ENCODE measurements at regions of chr7 and their contacts with region 1.

Region 1: DNA sequence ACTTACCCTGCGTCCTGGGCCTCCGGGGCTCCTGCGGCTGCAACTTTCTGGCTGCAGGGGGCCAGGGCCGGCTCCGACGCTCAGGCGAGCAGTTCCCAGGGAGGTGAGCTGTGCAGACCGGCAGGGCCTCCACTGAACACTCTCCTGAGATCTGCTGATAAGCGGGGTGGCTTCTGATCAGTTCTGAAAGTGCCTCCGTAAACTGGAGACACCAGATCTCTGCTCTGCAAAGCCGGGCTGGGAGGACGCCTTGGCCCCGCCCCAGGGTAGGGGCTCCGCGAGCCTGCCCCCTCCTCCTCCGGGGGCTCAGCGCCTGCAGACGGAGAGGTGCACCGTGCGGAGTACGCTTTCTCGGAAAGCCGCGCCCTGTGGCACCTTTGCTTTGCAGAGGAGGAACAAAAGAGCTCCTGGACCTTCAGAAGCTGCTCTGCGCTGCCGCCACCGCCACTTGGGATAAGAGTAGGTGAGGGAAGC is 141.3 kb upstream of the VKORC1L1 start:
- DNase-seq: peak; percentile 28
- H3K4me3 ChIP-seq: peak overlapping the region in 3 of 4 donors; percentile 27 to 56 (median 31)
- H3K27ac ChIP-seq: peak overlapping the region; percentile 44 to 58 (median 54)
- H3K4me1 ChIP-seq: peaks cover 0 to 12% (median 0%) of the 10 kb centered on the region in 4 donors
- H3K27me3 ChIP-seq: no peaks in the 10 kb centered on the region
- CTCF ChIP-seq: peak in 4 of 5 experiments; percentile 10 to 24 (median 16)
- EP300 ChIP-seq: no peak
- POLR2A ChIP-seq: no peak

Region 2: GRCh38 chr7:65951837-65952578 is 220.4 kb after region 1 on chr7:
- in situ Hi-C with region 1: loop called in 1 of 4 experiments (anchors 25 kb)
- intact Hi-C with region 1: no loop called
- DNase-seq: no peak
- H3K4me3 ChIP-seq: no peak overlapping the region
- H3K27ac ChIP-seq: no peak overlapping the region
- H3K4me1 ChIP-seq: no peaks in the 10 kb centered on the region
- H3K27me3 ChIP-seq: no peaks in the 10 kb centered on the region
- CTCF ChIP-seq: no peak
- EP300 ChIP-seq: no peak
- POLR2A ChIP-seq: no peak

Region 3: DNA sequence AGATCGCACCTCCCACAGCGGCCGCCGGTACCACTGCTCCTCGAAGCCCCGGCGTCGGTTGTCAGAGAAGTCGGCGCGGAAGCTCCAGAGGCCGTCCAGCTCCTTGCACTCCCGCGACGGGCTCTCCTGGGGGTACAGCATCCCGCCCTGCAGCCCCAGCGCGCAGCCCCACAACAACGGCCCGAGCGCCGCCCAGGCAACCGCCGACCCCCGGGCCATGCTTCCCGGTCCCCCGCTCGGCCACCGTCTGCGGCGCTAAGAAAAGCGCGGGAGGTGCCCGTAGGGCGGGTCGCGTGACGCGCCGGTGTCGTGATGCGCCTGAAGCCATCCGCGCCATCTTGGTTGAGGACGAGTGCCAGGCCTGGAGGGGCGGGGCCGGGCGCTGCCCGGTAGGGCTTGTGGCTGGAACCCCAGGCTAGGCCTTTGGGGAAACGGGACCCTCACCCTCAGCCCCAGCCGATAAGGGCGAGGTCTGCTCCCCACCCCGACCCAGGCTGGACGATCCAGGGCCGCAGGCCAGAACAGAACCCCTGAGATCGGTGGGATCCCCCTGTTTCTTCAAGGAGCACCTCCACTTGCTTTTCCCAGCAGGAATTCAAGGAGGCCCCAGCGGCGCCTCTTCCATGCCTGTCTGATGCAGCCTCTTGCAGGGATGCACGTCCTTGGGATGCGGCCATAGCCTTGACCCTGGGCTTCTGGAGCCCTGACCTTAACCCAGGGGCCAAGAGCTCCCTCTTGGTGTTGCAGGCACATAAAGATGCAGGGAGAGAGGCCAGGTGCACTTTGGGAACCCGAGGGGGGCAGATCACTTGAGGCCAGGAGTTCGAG is 250.6 kb after region 1 on chr7 and contains the start of gene GUSB:
- in situ Hi-C with region 1: loop called in 1 of 4 experiments (anchors 25 kb)
- intact Hi-C with region 1: no loop called
- DNase-seq: peak; percentile 95
- H3K4me3 ChIP-seq: peak within 1 kb of the TSS; percentile 83 to 94 (median 89)
- H3K27ac ChIP-seq: peak within 1 kb of the TSS; percentile 82 to 89 (median 86)
- H3K4me1 ChIP-seq: peaks cover 0 to 25% (median 19%) of the 10 kb centered on the region in 4 donors
- H3K27me3 ChIP-seq: no peaks in the 10 kb centered on the region
- CTCF ChIP-seq: no peak
- EP300 ChIP-seq: no peak
- POLR2A ChIP-seq: peak; percentile 76
- total RNA-seq, gene GUSB: 48.3 to 346 (median 55.3) TPM

Region 4: GRCh38 chr7:66075590-66076461 is 344.2 kb after region 1 on chr7 and contains the start of gene ASL:
- in situ Hi-C with region 1: no loop called
- intact Hi-C with region 1: no loop called
- DNase-seq: peak; percentile 97
- H3K4me3 ChIP-seq: peak within 1 kb of the TSS; percentile 57 to 92 (median 78)
- H3K27ac ChIP-seq: peak within 1 kb of the TSS; percentile 78 to 88 (median 86)
- H3K4me1 ChIP-seq: peaks cover 14 to 23% (median 18%) of the 10 kb centered on the region in 4 donors
- H3K27me3 ChIP-seq: no peaks in the 10 kb centered on the region
- CTCF ChIP-seq: peak in 1 of 5 experiments; percentile 27
- EP300 ChIP-seq: no peak
- POLR2A ChIP-seq: peak; percentile 94
- total RNA-seq, gene ASL: 77.2 to 179 (median 129) TPM

Measured in transverse colon (tissue), 4 donors.